ENCODE measurements at regions of chr4 and their contacts with region 1.

Region 1: GRCh38 chr4:177441803-177442622 is at the start of gene AGA:
- DNase-seq: peak; percentile 94
- H3K4me3 ChIP-seq: peak within 1 kb of the TSS; percentile 49 to 91 (median 77)
- H3K27ac ChIP-seq: peak within 1 kb of the TSS; percentile 96
- H3K4me1 ChIP-seq: peaks cover 13% of the 10 kb centered on the region
- H3K27me3 ChIP-seq: no peaks in the 10 kb centered on the region
- CTCF ChIP-seq: no peak
- POLR2A ChIP-seq: peak; percentile 95
- total RNA-seq, gene AGA: 16.7 and 16.9 TPM in 2 replicates

Region 2: GRCh38 chr4:176319704-176320339 is 1122.2 kb before region 1 on chr4 and contains the start of gene SPCS3:
- CTCF ChIA-PET with region 1: no interaction called
- POLR2A ChIA-PET with region 1: no interaction called
- dilution Hi-C with region 1: no loop called
- intact Hi-C with region 1: loop called (anchors 2 kb)
- DNase-seq: peak; percentile 95
- H3K4me3 ChIP-seq: peak within 1 kb of the TSS; percentile 51 to 85 (median 74)
- H3K27ac ChIP-seq: peak within 1 kb of the TSS; percentile 99
- H3K4me1 ChIP-seq: peaks cover 20% of the 10 kb centered on the region
- H3K27me3 ChIP-seq: no peaks in the 10 kb centered on the region
- CTCF ChIP-seq: no peak
- POLR2A ChIP-seq: peak; percentile 95
- total RNA-seq, gene SPCS3: 179 and 183 TPM in 2 replicates

Region 3: GRCh38 chr4:176377780-176378179 is 1064.2 kb before region 1 on chr4:
- CTCF ChIA-PET with region 1: interaction called, 3 read pairs
- POLR2A ChIA-PET with region 1: no interaction called
- dilution Hi-C with region 1: no loop called
- intact Hi-C with region 1: loop called (anchors 5 kb)
- DNase-seq: peak; percentile 39
- H3K4me3 ChIP-seq: no peak overlapping the region
- H3K27ac ChIP-seq: no peak overlapping the region
- H3K4me1 ChIP-seq: peaks cover under 1% of the 10 kb centered on the region
- H3K27me3 ChIP-seq: peaks cover 0 to 5% of the 10 kb centered on the region in 2 experiments
- CTCF ChIP-seq: peak in 1 of 2 donors; percentile 14
- POLR2A ChIP-seq: no peak

Region 4: DNA sequence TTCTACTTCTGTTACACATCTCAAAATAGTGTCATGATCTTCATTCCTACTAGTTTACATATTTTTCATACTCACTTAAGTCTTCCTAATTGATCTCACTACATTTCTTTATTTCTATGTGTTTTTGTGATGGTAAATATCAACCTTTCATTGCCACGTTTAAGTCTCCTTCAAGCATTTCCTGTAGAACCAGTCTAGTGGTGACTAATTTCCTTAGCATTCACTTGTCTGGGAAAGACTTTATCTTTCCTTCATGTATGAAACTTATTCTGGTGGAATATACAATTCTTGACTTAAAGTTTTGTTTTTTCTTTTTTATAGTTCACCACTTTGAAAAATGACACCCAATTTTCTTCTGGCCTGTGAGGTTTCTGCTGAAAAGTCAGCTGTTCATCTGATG is 313.7 kb before region 1 on chr4:
- CTCF ChIA-PET with region 1: no interaction called
- POLR2A ChIA-PET with region 1: no interaction called
- dilution Hi-C with region 1: no loop called
- intact Hi-C with region 1: loop called (anchors 2 kb)
- DNase-seq: peak; percentile 77
- H3K4me3 ChIP-seq: peak overlapping the region in 1 of 3 experiments; percentile 10
- H3K27ac ChIP-seq: peak overlapping the region; percentile 77
- H3K4me1 ChIP-seq: peaks cover 19% of the 10 kb centered on the region
- H3K27me3 ChIP-seq: no peaks in the 10 kb centered on the region
- CTCF ChIP-seq: no peak
- POLR2A ChIP-seq: no peak

Region 5: GRCh38 chr4:177309522-177310371 is 132.3 kb before region 1 on chr4 and contains the start of gene NEIL3:
- CTCF ChIA-PET with region 1: interaction called, 3 read pairs
- POLR2A ChIA-PET with region 1: no interaction called
- dilution Hi-C with region 1: no loop called
- intact Hi-C with region 1: loop called (anchors 1 kb)
- DNase-seq: peak; percentile 90
- H3K4me3 ChIP-seq: peak within 1 kb of the TSS; percentile 66 to 97 (median 91)
- H3K27ac ChIP-seq: peak within 1 kb of the TSS; percentile 46
- H3K4me1 ChIP-seq: peaks cover 10% of the 10 kb centered on the region
- H3K27me3 ChIP-seq: no peaks in the 10 kb centered on the region
- CTCF ChIP-seq: no peak
- POLR2A ChIP-seq: peak; percentile 65
- total RNA-seq, gene NEIL3: 6.9 and 8.2 TPM in 2 replicates

Region 6: DNA sequence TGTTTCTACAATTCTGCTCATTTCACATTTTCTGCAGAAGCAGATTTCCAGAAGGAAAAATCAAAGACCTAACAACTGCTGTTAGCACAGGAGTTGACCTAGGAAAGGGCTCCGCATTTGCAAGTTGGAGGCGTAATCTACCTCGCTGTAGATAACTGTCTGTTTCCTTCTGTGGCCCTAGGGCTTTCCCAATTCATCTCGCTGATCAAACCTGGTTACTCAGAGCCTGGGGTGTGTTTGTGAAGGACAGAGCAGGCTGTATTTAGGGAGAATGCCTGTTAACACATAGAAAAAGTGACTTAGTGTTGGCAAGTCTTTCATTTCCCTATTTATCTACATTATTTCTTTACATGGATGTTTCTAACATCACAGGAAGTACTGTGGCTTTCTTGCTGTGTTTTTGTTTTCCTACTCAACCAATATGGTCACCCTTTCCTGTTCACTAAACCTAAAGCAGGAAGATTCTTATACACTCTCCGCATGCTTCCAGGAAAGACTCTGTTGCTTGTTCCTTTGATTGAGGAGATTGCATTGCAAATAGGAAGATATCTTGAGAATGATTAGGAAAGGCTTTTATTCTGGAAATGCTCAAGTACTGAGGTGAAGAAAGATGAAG is 40.2 kb before region 1 on chr4:
- CTCF ChIA-PET with region 1: no interaction called
- POLR2A ChIA-PET with region 1: no interaction called
- dilution Hi-C with region 1: no loop called
- intact Hi-C with region 1: no loop called
- DNase-seq: no peak
- H3K4me3 ChIP-seq: no peak overlapping the region
- H3K27ac ChIP-seq: no peak overlapping the region
- H3K4me1 ChIP-seq: no peaks in the 10 kb centered on the region
- H3K27me3 ChIP-seq: peaks cover 0 to 2% of the 10 kb centered on the region in 2 experiments
- CTCF ChIP-seq: no peak
- POLR2A ChIP-seq: no peak

Region 7: DNA sequence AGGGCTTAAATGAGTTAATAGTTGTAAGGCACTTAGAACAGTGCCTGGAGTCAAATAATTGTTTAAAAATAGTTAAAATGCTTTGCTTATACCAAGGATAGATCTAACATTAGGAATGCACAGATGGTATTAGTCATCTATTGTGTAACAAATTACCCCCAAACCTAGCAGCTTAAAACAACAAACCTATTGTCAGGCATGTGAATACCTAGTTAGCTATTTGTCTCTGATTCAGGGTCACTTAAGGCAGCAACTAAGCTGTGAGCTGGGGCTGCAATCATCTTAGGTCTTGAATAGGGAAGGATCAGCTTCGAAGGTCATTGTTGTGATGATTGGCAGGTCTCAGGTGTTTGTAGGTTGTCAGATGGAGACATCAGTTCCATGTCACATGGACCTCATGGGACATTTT is 42.6 kb after region 1 on chr4:
- CTCF ChIA-PET with region 1: no interaction called
- POLR2A ChIA-PET with region 1: no interaction called
- dilution Hi-C with region 1: no loop called
- intact Hi-C with region 1: loop called (anchors 1 kb)
- DNase-seq: peak; percentile 30
- H3K4me3 ChIP-seq: no peak overlapping the region
- H3K27ac ChIP-seq: peak overlapping the region; percentile 50
- H3K4me1 ChIP-seq: peaks cover 23% of the 10 kb centered on the region
- H3K27me3 ChIP-seq: no peaks in the 10 kb centered on the region
- CTCF ChIP-seq: no peak
- POLR2A ChIP-seq: no peak

Region 8: GRCh38 chr4:177555007-177555574 is 113.1 kb after region 1 on chr4:
- CTCF ChIA-PET with region 1: no interaction called
- POLR2A ChIA-PET with region 1: no interaction called
- dilution Hi-C with region 1: no loop called
- intact Hi-C with region 1: loop called (anchors 2 kb)
- DNase-seq: peak; percentile 7
- H3K4me3 ChIP-seq: no peak overlapping the region
- H3K27ac ChIP-seq: no peak overlapping the region
- H3K4me1 ChIP-seq: no peaks in the 10 kb centered on the region
- H3K27me3 ChIP-seq: no peaks in the 10 kb centered on the region
- CTCF ChIP-seq: peak; percentile 29 to 32
- POLR2A ChIP-seq: no peak

Measured in endothelial cell of umbilical vein (primary cell).